Activated T-helper 1 cell treated with anti-CD3 and anti-CD28 coated beads, Interleukin-12 subunit alpha, Interleukin-12 subunit beta, Interleukin-2, Interleukin-4 antibody, amounts not matched to agents 30 ng/mL and 10 ng/mL and 1 ng/mL, durations not matched to agents 14 hours and 24 hours and 36 hours (primary cell): ENCODE measurements at regions of chr10 and their contacts with region 1.

Region 1: GRCh38 chr10:80504158-80504811 is 33.4 kb upstream of the SH2D4B start:
- DNase-seq: no peak
- H3K4me3 Mint-ChIP-seq: no peak overlapping the region
- H3K27ac Mint-ChIP-seq: peak overlapping the region; percentile 86
- H3K4me1 Mint-ChIP-seq: peaks cover 67% of the 10 kb centered on the region
- H3K27me3 Mint-ChIP-seq: no peaks in the 10 kb centered on the region

Region 2: GRCh38 chr10:80041162-80041561 is 463.1 kb before region 1 on chr10:
- intact Hi-C with region 1: no loop called
- DNase-seq: no peak
- H3K4me3 Mint-ChIP-seq: no peak overlapping the region
- H3K27ac Mint-ChIP-seq: no peak overlapping the region
- H3K4me1 Mint-ChIP-seq: peaks cover under 1% of the 10 kb centered on the region
- H3K27me3 Mint-ChIP-seq: no peaks in the 10 kb centered on the region

Region 3: DNA sequence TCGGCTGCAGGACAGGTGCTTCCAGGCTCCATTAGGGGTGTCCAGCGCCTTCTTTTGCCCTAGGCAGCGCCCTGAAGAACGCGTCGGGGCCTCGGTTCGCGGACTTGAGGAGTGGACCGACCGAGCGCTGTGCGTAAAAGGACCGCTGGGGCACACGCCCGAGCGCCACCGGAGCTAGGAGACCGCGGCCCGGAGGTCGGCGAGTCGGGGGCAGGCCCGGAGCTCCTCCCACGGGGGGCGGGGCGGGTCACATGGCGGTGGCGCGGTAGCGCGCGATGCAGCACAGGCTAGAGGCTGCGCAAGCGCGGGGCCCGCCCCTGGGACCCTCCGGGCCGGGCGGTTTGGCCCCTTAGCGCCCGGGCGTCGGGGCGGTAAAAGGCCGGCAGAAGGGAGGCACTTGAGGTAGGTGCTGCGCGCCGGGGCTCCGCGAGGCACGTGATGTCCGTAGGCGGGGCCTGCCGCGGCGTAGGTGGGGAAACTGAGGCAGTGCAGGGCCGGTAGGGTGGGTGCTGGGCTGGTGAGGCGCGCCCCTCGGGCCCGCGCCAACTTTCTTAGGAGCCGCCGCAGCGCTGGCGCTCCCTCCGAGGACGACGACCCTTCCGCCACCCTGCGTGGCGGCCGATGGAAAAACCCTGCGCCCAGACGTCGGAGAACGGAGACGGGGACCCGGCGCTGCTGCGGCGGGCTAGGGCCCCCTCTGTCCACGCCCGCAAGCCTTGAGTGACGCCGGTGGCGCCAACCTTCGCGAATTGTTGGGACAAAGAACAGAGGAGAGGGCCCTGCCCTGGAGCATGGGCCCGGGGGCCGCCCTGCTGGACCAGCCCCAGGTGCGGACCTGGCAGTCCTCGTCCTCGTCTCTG is 95.8 kb before region 1 on chr10 and contains the start of gene PRXL2A:
- intact Hi-C with region 1: no loop called
- DNase-seq: peak; percentile 81
- H3K4me3 Mint-ChIP-seq: peak within 1 kb of the TSS; percentile 89
- H3K27ac Mint-ChIP-seq: peak within 1 kb of the TSS; percentile 93
- H3K4me1 Mint-ChIP-seq: peaks cover 28% of the 10 kb centered on the region
- H3K27me3 Mint-ChIP-seq: peaks cover 20% of the 10 kb centered on the region
- total RNA-seq, gene PRXL2A: 11.9 and 13.2 TPM in 2 replicates

Region 4: GRCh38 chr10:80459047-80459931 is 45.0 kb before region 1 on chr10:
- intact Hi-C with region 1: loop called (anchors 1 kb)
- DNase-seq: peak; percentile 67
- H3K4me3 Mint-ChIP-seq: peak overlapping the region; percentile 98
- H3K27ac Mint-ChIP-seq: peak overlapping the region; percentile 88
- H3K4me1 Mint-ChIP-seq: peaks cover 86% of the 10 kb centered on the region
- H3K27me3 Mint-ChIP-seq: no peaks in the 10 kb centered on the region